ENCODE measurements at regions of chrX and their contacts with region 1.

Region 1: GRCh38 chrX:139971394-139971749 is 6.1 kb upstream of the CXorf66 start:
- DNase-seq: no peak
- H3K4me3 ChIP-seq: no peak overlapping the region
- CTCF ChIP-seq: no peak
- POLR2A ChIP-seq: no peak

Region 2: DNA sequence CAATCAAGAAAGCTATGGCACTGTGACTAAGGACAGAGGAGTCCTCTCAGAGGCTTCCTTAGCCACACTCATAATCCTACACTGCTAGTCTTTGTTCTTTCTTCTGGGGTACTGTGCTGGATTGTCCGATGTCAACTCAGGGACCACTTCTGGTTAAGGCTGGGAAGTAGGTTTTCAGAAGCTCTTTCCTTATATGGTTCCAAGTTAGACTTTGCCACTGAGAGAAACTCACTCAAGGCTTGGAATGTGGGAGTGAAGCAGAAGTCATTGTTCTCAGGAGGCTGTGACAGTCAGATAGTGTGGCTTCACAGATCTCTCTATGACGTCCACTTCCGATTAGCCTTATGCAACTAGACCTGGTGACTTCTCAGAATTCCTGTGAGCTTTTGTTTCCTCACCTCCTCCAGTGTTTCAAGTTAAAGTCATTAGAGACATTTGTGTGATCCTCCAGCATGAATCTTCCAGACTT is 758.1 kb before region 1 on chrX:
- intact Hi-C with region 1: loop called (anchors 5 kb)
- DNase-seq: no peak
- H3K4me3 ChIP-seq: no peak overlapping the region
- CTCF ChIP-seq: no peak
- POLR2A ChIP-seq: no peak

Region 3: GRCh38 chrX:139851730-139852129 is 119.6 kb before region 1 on chrX:
- intact Hi-C with region 1: no loop called
- DNase-seq: no peak
- H3K4me3 ChIP-seq: no peak overlapping the region
- CTCF ChIP-seq: no peak
- POLR2A ChIP-seq: no peak